Activated CD4-positive, alpha-beta T cell treated with anti-CD3 and anti-CD28 coated beads for 36 hours (primary cell): ENCODE measurements at regions of chr20 and their contacts with region 1.

Region 1: GRCh38 chr20:33443512-33444239 is at the start of gene SNTA1:
- DNase-seq: peak; percentile 95
- ATAC-seq: peak; percentile 92
- H3K4me3 Mint-ChIP-seq: peak within 1 kb of the TSS; percentile 83
- H3K27ac Mint-ChIP-seq: peak within 1 kb of the TSS; percentile 78
- H3K4me1 Mint-ChIP-seq: peaks cover 15% of the 10 kb centered on the region
- H3K27me3 Mint-ChIP-seq: no peaks in the 10 kb centered on the region
- total RNA-seq, gene SNTA1: 4.2 to 5.0 TPM

Region 2: DNA sequence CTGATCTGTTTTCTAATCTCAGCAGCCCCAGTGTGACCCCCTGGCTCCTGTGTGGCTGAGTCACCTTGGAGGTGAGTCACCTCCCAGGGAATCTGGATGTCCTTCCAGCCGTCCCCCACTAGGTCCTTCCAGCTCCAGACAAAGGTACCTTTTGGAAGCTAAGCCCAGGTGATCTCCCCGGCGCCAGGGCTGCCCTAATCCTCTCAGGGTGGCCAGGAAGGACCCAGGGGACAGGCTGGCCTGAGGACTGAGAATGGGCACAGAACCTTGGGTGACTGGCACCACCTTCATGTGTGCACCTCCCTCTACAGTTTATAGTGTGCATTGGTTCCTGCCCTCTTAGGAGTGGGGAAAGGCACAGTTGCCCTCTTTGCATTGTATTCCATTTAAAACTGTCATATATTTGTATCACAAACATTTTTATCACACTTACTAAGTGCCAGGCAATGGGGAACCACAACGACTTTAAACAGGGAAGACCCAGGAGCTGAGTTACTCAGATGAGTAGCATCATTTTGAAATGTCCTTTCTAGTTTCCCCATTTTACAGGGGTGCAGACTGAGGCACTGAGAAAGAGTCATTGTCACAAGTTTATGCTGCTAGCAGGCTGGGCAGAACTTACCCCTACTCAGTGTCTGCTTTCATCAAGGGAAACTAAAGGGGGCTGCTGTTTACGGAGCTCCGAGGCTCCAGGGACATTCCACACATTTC is 366.9 kb before region 1 on chr20:
- CTCF ChIA-PET with region 1: no interaction called
- POLR2A ChIA-PET with region 1: no interaction called
- intact Hi-C with region 1: no loop called
- DNase-seq: peak; percentile 14
- ATAC-seq: no peak
- H3K4me3 Mint-ChIP-seq: no peak overlapping the region
- H3K27ac Mint-ChIP-seq: no peak overlapping the region
- H3K4me1 Mint-ChIP-seq: peaks cover 2% of the 10 kb centered on the region
- H3K27me3 Mint-ChIP-seq: no peaks in the 10 kb centered on the region

Region 3: DNA sequence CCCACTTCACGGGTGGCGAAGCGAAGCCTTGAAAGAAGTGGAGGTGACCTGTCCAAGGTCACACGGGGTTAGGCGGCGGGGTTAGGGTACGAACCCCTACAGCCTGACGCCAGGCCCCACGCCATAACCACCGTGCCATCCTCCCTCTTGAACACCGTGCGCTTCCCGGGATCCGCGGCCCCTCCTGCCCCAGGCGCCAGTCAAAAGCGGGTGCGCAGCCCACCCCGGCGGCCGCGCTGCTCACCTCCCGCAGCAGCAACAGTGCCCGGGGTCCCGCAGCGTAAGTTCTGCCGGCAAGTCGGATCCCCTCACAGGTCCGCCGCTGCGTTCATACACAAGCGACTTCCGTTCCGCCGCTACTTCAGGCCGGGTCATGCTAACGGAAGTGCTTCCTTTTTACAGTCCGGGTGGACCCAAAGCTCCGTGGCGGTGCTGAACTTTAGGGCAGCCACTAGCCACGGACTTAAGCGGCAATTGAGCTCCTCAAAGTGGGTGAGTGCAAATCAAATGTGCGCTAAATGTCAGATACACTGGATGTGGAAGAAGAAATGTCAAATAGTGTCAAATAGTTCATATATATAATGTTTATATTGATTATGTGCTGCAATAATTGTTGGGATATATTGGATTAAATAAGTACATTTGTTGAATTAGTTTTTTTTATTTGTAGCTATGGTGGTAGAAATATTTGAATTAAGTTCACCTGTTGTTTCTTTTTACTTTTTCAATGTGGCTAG is 42.3 kb before region 1 on chr20 and contains the start of gene CDK5RAP1:
- CTCF ChIA-PET with region 1: interaction called, 3 read pairs
- POLR2A ChIA-PET with region 1: no interaction called
- intact Hi-C with region 1: loop called (anchors 1 to 2 kb)
- DNase-seq: peak; percentile 92
- ATAC-seq: peak; percentile 98
- H3K4me3 Mint-ChIP-seq: peak within 1 kb of the TSS; percentile 79
- H3K27ac Mint-ChIP-seq: peak within 1 kb of the TSS; percentile 90
- H3K4me1 Mint-ChIP-seq: peaks cover 42% of the 10 kb centered on the region
- H3K27me3 Mint-ChIP-seq: no peaks in the 10 kb centered on the region
- total RNA-seq, gene CDK5RAP1: 31.3 to 41.5 TPM

Region 4: DNA sequence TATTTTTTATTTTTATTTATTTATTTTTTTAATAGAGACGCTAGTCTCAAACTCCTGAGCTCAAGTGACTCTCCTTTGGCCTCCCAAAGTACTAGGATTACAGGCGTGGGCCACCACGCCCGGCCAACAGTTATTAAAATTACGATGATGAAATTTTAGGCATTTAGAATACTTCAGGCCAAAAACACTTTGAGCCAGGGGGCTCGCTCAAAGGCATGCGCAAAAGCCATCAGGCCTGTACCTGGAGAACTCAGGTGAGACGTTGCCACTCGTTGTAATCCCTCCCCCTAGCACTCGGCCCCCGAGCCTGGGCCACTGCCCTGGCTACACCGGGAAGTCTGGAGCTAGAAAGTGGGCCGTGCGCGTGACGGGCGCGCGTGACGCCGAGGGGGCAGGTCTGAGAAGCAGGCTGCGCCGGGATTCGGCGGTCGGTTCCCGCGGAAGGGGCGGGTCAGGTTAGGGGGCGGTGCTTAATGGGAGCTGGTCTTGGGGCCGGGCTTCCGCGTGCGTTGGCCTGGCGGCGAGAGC is 45.9 kb after region 1 on chr20:
- CTCF ChIA-PET with region 1: interaction called, 5 read pairs
- POLR2A ChIA-PET with region 1: interaction called, 9 read pairs
- intact Hi-C with region 1: loop called (anchors 1 to 5 kb)
- DNase-seq: peak; percentile 99
- ATAC-seq: peak; percentile 98
- H3K4me3 Mint-ChIP-seq: peak overlapping the region; percentile 85
- H3K27ac Mint-ChIP-seq: peak overlapping the region; percentile 78
- H3K4me1 Mint-ChIP-seq: peaks cover 6% of the 10 kb centered on the region
- H3K27me3 Mint-ChIP-seq: no peaks in the 10 kb centered on the region

Region 5: DNA sequence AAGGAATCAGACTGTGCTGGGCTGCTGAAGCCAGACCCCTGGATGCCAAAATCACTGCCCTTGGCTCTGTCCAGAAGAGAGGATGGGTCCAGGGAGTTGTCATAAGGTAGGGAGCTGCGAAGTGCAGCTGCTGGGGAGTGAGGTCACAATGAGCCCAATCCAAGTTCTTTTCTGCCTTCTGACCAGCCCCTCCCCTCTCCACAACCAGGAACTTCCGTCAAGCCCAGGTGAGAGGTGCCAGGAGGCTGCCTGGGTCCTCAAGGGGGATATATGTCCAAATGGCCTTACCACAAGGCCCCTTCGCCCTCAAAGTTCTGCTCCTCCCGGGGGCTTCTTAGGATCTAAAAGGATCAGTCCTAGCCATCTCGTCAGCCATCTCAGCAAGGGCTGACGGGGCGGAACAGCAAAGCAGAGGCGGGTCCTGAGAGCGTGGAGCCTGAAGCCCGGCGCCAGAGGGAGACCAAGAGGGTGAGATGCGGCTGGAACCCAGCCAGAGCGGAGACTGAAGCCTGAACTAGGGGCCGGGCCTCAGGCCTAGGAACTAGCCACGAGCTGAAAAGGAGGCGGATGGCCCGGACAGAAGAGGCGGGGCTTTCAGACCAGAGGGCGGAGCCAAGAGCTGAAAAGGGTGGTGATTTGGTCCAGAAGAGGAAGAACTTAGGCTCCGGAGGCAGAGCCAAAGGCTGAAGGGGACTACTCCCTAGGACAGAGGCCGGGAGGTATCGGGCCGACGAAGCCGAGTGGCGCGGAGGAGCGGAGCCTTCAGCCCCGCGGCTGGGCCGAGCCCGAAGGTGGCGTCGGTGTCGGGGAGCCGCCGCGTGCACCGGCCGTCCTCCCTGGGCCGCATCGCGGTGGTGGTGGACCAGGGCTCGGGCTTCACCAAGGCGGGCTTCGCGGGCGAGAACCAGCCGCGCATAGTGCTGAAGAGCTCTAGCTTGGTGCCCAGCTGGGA is 222.9 kb after region 1 on chr20 and contains the start of gene ACTL10:
- CTCF ChIA-PET with region 1: interaction called, 13 read pairs
- POLR2A ChIA-PET with region 1: interaction called, 4 read pairs
- intact Hi-C with region 1: loop called (anchors 1 to 5 kb)
- DNase-seq: peak; percentile 89
- ATAC-seq: peak; percentile 59
- H3K4me3 Mint-ChIP-seq: peak within 1 kb of the TSS; percentile 75
- H3K27ac Mint-ChIP-seq: peak within 1 kb of the TSS; percentile 90
- H3K4me1 Mint-ChIP-seq: peaks cover 31% of the 10 kb centered on the region
- H3K27me3 Mint-ChIP-seq: no peaks in the 10 kb centered on the region
- total RNA-seq, gene ACTL10: 0.91 to 1.7 TPM

Region 6: DNA sequence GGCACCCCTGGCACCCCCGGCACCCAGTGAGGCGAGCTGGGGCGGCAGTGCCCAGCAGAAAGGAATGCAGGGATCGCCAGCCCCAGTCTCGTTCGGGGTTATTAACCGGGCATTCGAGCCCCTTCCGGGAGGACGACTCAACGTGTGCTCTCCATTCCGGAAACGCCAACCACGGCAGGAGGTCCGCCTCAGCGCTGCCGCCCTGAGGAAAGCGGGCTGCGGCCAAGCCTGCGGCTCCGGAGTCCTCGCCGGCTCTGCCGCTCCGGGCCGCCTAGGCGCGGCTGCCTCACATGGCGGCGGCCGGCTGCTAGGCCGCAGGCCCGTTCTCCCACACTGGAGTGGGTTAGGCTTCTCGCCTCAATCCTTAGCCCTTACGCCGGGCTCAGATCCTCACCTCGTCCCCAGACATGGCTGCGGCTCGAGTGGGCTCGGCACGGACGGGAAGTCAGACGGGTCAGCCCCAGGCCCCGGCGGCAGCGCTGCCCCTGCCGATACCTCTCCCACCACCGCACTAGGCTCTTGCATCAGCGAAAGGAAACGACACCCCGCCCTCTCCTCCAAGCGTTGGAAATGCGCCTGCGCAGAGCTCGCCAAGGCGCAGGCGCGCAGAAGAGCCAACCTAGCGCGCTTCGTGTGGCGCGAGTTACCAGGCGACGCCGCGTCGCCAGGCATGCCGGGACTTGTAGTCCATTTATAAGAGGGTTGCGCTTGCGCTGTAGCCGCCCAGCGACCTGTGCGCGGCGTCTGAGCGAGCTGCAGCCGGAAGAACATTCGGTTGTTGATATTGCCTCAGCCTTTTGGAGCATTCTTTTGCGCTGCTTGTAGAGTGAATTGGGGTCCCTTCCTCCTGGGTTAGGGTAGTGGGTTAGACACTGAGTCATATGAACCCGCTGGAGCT is 668.3 kb after region 1 on chr20 and contains the start of gene EIF2S2:
- CTCF ChIA-PET with region 1: no interaction called
- POLR2A ChIA-PET with region 1: no interaction called
- intact Hi-C with region 1: loop called in 1 of 2 experiments (anchors 1 kb)
- DNase-seq: peak; percentile 97
- ATAC-seq: peak; percentile 88
- H3K4me3 Mint-ChIP-seq: peak within 1 kb of the TSS; percentile 86
- H3K27ac Mint-ChIP-seq: peak within 1 kb of the TSS; percentile 97
- H3K4me1 Mint-ChIP-seq: peaks cover 38% of the 10 kb centered on the region
- H3K27me3 Mint-ChIP-seq: no peaks in the 10 kb centered on the region
- total RNA-seq, gene EIF2S2: 179 to 187 TPM